ENCODE measurements at regions of chr6 and their contacts with region 1.

Region 1: GRCh38 chr6:168895102-168895812 is 358.4 kb downstream of the THBS2 start:
- DNase-seq: peak; percentile 83 to 90
- H3K4me3 ChIP-seq: no peak overlapping the region
- H3K4me3 Mint-ChIP-seq: peak overlapping the region; percentile 62
- H3K27ac Mint-ChIP-seq: peak overlapping the region; percentile 68
- H3K4me1 ChIP-seq: peaks cover 6% of the 10 kb centered on the region
- H3K4me1 Mint-ChIP-seq: peaks cover 16% of the 10 kb centered on the region
- H3K27me3 ChIP-seq: no peaks in the 10 kb centered on the region
- H3K27me3 Mint-ChIP-seq: no peaks in the 10 kb centered on the region
- CTCF ChIP-seq: peak; percentile 85 to 89

Region 2: DNA sequence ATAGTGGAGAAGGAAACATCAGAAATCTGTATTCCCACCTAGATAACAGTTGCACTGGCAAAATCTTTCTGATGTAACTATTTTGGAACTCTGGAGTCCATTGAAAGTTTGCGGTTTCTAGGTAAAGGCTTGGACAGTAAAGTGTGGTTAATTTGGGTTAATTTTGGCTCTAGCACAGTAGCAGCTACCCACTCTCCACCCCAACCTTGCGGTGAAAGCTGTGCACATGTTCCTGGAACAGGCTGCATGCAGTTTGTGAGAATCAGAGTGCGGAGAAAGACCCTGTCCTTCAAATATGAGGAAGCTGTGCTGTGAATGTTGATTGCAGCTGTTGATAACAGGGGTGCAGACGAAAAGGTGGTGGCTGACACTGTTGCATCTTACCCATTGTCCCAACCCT is 415.8 kb before region 1 on chr6:
- CTCF ChIA-PET with region 1: no interaction called
- POLR2A ChIA-PET with region 1: no interaction called
- intact Hi-C with region 1: no loop called
- DNase-seq: no peak
- H3K4me3 ChIP-seq: no peak overlapping the region
- H3K4me3 Mint-ChIP-seq: no peak overlapping the region
- H3K27ac Mint-ChIP-seq: no peak overlapping the region
- H3K4me1 ChIP-seq: no peaks in the 10 kb centered on the region
- H3K4me1 Mint-ChIP-seq: no peaks in the 10 kb centered on the region
- H3K27me3 ChIP-seq: no peaks in the 10 kb centered on the region
- H3K27me3 Mint-ChIP-seq: peaks cover 12% of the 10 kb centered on the region
- CTCF ChIP-seq: no peak

Region 3: GRCh38 chr6:168838037-168838399 is 57.2 kb before region 1 on chr6:
- CTCF ChIA-PET with region 1: no interaction called
- POLR2A ChIA-PET with region 1: no interaction called
- intact Hi-C with region 1: no loop called
- DNase-seq: no peak
- H3K4me3 ChIP-seq: no peak overlapping the region
- H3K4me3 Mint-ChIP-seq: no peak overlapping the region
- H3K27ac Mint-ChIP-seq: no peak overlapping the region
- H3K4me1 ChIP-seq: peaks cover 14% of the 10 kb centered on the region
- H3K4me1 Mint-ChIP-seq: peaks cover 23% of the 10 kb centered on the region
- H3K27me3 ChIP-seq: no peaks in the 10 kb centered on the region
- H3K27me3 Mint-ChIP-seq: peaks cover 8% of the 10 kb centered on the region
- CTCF ChIP-seq: no peak

Region 4: GRCh38 chr6:168916576-168917207 is 21.4 kb after region 1 on chr6:
- CTCF ChIA-PET with region 1: no interaction called
- POLR2A ChIA-PET with region 1: no interaction called
- intact Hi-C with region 1: loop called (anchors 1 kb)
- DNase-seq: no peak
- H3K4me3 ChIP-seq: no peak overlapping the region
- H3K4me3 Mint-ChIP-seq: no peak overlapping the region
- H3K27ac Mint-ChIP-seq: no peak overlapping the region
- H3K4me1 ChIP-seq: peaks cover 10% of the 10 kb centered on the region
- H3K4me1 Mint-ChIP-seq: peaks cover 25% of the 10 kb centered on the region
- H3K27me3 ChIP-seq: no peaks in the 10 kb centered on the region
- H3K27me3 Mint-ChIP-seq: no peaks in the 10 kb centered on the region
- CTCF ChIP-seq: no peak

Region 5: DNA sequence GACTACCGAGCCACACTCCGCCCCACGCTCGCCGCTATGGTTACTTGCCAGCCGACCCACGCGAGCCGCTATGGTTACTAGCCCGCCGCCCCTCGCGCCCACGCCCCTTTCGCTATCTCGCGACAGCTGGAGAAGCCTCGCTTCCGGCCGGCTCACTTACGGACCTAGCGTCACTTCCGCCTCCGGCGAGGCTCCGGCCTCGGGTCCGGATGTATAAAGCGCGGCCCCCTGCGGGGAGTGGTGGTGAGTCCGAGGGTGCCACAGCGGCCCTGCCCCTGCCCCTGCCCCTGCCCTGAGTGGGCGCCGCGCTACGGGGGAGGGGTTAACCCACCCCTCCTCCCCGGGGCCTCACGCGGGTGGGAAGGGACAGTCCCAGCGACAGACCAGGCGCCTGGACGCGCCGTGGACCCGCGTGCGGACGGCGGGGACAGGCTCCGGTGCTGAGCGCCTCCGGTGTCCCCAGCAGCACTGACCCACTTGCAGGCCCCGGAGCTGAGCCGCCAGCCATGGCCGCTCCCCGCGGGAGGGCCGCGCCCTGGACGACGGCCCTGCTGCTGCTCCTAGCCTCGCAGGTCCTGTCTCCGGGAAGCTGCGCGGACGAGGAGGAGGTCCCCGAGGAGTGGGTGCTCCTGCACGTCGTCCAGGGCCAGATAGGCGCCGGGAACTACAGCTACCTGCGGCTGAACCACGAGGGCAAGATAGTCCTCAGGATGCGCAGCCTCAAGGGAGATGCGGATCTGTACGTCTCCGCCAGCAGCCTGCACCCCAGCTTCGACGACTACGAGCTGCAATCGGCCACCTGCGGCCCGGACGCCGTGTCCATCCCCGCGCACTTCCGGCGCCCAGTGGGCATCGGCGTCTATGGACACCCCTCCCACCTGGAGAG is 806.9 kb after region 1 on chr6 and contains the starts of genes C6orf120 and WDR27:
- CTCF ChIA-PET with region 1: no interaction called
- POLR2A ChIA-PET with region 1: no interaction called
- intact Hi-C with region 1: loop called (anchors 5 kb)
- DNase-seq: peak; percentile 95 to 97
- H3K4me3 ChIP-seq: peak within 1 kb of the TSS; percentile 87
- H3K4me3 Mint-ChIP-seq: peak within 1 kb of the TSS; percentile 85
- H3K27ac Mint-ChIP-seq: peak within 1 kb of the TSS; percentile 85
- H3K4me1 ChIP-seq: peaks cover 25% of the 10 kb centered on the region
- H3K4me1 Mint-ChIP-seq: peaks cover 13% of the 10 kb centered on the region
- H3K27me3 ChIP-seq: no peaks in the 10 kb centered on the region
- H3K27me3 Mint-ChIP-seq: no peaks in the 10 kb centered on the region
- CTCF ChIP-seq: no peak
- total RNA-seq, gene C6orf120: 24.9 and 26.4 TPM in 2 replicates
- total RNA-seq, gene WDR27: 62.9 and 70.1 TPM in 2 replicates

Region 6: DNA sequence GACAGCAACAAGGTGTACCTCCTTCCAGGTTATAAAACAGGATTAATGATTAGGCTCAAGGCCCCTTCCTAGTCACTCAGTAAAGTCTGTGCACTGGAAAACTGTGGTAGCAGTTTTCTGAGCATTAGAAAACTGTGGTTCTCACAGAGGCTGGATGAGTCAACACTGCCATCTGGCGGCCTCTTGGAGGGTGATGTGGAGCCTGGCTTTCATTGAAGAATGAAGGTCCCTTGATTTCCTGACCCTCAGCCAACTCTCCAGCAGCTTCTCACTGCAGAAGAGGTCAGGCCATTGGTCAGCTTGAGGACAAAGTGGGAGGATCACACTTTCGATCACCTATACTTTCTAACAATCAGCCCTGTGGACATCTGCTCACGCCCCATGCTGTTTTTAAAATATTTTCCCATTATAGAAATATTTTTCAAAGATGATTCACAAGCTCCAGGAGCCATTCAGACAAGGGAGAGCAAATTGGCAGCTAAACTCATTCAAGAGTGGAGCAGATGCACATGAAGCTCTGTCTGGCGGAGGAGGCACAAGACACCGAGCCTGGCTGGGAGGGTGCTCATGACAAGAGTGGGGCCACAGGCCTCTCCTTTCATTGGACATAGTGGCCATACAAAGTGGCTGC is 1634.7 kb after region 1 on chr6:
- CTCF ChIA-PET with region 1: no interaction called
- POLR2A ChIA-PET with region 1: no interaction called
- intact Hi-C with region 1: loop called (anchors 1 kb)
- DNase-seq: peak; percentile 69 to 74
- H3K4me3 ChIP-seq: no peak overlapping the region
- H3K4me3 Mint-ChIP-seq: no peak overlapping the region
- H3K27ac Mint-ChIP-seq: no peak overlapping the region
- H3K4me1 ChIP-seq: peaks cover 13% of the 10 kb centered on the region
- H3K4me1 Mint-ChIP-seq: peaks cover under 1% of the 10 kb centered on the region
- H3K27me3 ChIP-seq: no peaks in the 10 kb centered on the region
- H3K27me3 Mint-ChIP-seq: no peaks in the 10 kb centered on the region
- CTCF ChIP-seq: peak; percentile 77 to 91